ENCODE measurements at regions of chr3 and their contacts with region 1.

Region 1: DNA sequence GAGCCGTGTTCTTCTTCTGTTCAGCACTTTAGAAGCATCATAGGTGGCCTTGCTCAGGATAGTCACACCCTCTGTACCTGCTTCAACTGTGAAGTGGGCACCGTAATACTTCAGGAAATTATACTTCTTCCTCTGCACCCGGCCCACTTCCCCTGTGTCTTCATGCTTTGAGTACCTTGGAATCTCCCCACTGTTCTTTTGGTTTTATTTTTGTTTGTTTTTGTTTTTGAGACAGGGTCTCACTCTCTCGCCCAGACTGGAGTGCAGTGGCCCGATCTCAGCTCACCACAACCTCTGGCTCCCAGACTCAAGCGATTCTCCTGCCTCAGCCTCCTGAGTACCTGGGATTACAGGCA is 1.7 kb downstream of the P2RY14 start:
- DNase-seq: peak; percentile 77
- H3K4me3 Mint-ChIP-seq: peak overlapping the region; percentile 55
- H3K27ac Mint-ChIP-seq: peak overlapping the region; percentile 85
- H3K4me1 Mint-ChIP-seq: peaks cover 39% of the 10 kb centered on the region
- H3K27me3 Mint-ChIP-seq: no peaks in the 10 kb centered on the region

Region 2: GRCh38 chr3:151191095-151191494 is 85.6 kb before region 1 on chr3:
- CTCF ChIA-PET with region 1: interaction called, 4 read pairs
- intact Hi-C with region 1: loop called (anchors 1 kb)
- DNase-seq: no peak
- H3K4me3 Mint-ChIP-seq: peak overlapping the region; percentile 41
- H3K27ac Mint-ChIP-seq: peak overlapping the region; percentile 93
- H3K4me1 Mint-ChIP-seq: peaks cover 68% of the 10 kb centered on the region
- H3K27me3 Mint-ChIP-seq: no peaks in the 10 kb centered on the region

Region 3: DNA sequence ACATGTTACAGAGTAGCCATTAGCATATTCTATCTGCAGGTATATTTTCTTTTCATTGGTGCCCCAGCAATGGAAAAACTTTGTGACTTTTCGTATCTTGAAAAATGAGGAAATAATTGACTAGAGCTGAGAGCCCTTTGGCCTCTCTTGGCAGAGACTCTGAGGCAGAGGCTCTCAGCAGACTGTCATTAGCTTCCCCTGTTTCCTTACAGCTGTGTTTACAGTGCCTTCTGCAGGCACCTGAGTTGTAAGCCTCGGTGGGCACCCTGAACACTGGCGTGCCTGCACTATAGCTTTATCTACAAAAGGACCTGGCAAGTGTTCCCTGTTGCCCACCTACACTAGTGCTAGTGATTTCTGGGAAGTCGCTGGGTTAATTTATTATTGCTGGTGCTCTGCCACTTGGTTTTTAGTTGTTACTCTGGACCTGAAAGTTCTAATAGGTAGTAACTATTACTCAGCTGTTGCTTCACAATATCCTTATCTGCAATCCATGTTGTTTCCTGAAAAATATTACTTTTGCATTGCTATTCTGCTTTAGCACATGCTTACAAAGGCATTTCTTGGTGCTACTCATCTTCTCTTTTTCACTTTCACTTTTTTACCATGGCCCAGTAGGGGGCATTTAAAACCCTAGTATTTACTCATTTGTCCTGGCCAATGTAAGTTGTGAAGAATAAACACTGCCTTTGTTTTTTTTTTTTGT is 65.8 kb before region 1 on chr3:
- CTCF ChIA-PET with region 1: interaction called, 10 read pairs
- intact Hi-C with region 1: loop called (anchors 1 kb)
- DNase-seq: peak; percentile 31
- H3K4me3 Mint-ChIP-seq: peak overlapping the region; percentile 48
- H3K27ac Mint-ChIP-seq: peak overlapping the region; percentile 90
- H3K4me1 Mint-ChIP-seq: peaks cover 56% of the 10 kb centered on the region
- H3K27me3 Mint-ChIP-seq: no peaks in the 10 kb centered on the region

Region 4: GRCh38 chr3:151265866-151266265 is 10.8 kb before region 1 on chr3:
- CTCF ChIA-PET with region 1: interaction called, 24 read pairs
- intact Hi-C with region 1: loop called (anchors 1 kb)
- DNase-seq: no peak
- H3K4me3 Mint-ChIP-seq: no peak overlapping the region
- H3K27ac Mint-ChIP-seq: no peak overlapping the region
- H3K4me1 Mint-ChIP-seq: peaks cover 17% of the 10 kb centered on the region
- H3K27me3 Mint-ChIP-seq: no peaks in the 10 kb centered on the region

Region 5: GRCh38 chr3:151316267-151316991 is 39.8 kb after region 1 on chr3 and contains the start of gene GPR87:
- CTCF ChIA-PET with region 1: interaction called, 3 read pairs
- intact Hi-C with region 1: loop called (anchors 2 kb)
- DNase-seq: peak; percentile 48
- H3K4me3 Mint-ChIP-seq: no peak within 1 kb of the TSS
- H3K27ac Mint-ChIP-seq: no peak within 1 kb of the TSS
- H3K4me1 Mint-ChIP-seq: peaks cover 12% of the 10 kb centered on the region
- H3K27me3 Mint-ChIP-seq: no peaks in the 10 kb centered on the region
- total RNA-seq, gene GPR87: 0.19 TPM in 1 of 2 experiments, not detected in the other

Region 6: DNA sequence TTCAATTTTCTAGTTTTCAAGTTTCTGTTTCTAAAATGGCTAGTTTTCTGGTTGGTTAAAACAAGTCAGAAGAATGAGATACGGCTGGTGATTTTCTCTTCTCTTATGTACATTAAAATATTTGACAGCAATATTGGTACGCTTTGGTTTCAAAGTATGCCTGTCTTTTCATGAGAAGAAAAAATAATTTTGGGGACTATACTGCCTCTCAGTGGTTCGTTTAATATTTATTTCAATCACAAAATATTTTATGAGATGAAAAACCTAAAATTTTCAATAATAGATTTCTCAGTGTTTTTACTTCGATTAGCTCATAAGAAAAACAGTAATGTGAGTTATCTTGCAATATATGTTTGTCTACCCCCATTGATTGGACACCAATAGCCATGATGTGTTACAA is 384.2 kb after region 1 on chr3:
- CTCF ChIA-PET with region 1: no interaction called
- intact Hi-C with region 1: no loop called
- DNase-seq: no peak
- H3K4me3 Mint-ChIP-seq: no peak overlapping the region
- H3K27ac Mint-ChIP-seq: no peak overlapping the region
- H3K4me1 Mint-ChIP-seq: no peaks in the 10 kb centered on the region
- H3K27me3 Mint-ChIP-seq: no peaks in the 10 kb centered on the region

Measured in activated naive CD4-positive, alpha-beta T cell treated with anti-CD3 and anti-CD28 coated beads for 36 hours (primary cell).